ENCODE measurements at regions of chr6 and their contacts with region 1.

Region 1: DNA sequence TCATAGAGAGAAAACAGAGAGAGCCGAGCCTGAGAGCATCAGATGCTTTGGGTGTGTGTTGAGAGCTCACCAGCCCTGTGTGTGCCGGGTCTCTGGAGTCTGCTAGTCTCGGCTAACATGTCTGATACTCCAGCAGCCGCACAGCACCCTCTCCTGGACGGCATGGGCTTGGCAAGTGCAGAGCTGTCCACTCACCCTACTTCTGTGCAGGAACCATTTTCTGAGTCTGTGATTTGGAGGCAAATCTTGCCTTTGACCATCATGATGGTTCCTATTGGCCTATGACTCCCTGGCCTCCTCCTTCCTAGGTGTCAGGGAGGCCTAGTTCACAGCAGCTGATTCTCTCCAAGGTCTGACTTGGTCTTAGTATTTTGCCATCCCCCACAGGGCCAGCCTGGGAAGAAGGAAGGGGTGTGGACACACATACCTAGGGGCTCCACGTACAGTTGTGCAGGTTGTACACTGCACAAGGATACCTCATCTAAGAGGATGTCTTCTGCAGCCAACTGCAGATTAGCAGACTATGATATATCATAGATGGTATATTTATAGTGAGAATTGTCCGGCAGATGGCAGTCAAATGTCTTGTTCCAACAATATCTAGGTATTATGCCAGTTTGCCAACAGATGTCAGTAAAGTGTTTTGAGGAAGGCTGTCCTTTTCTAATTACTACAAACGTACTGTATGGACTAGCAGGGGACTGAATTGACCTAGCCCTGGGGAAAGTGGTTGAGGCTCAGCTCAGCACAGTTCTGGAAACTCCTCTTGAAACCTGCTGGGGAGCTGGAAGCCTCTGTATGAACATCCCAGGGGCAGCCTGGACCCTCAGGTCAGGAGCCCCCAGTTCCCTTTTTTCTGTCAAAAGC is 13.0 kb downstream of the FGD2 start:
- DNase-seq: peak; percentile 85
- H3K4me3 ChIP-seq: no peak overlapping the region
- H3K27ac ChIP-seq: no peak overlapping the region
- H3K4me1 ChIP-seq: peaks cover 10% of the 10 kb centered on the region
- H3K27me3 ChIP-seq: no peaks in the 10 kb centered on the region
- CTCF ChIP-seq: peak; percentile 93 to 97
- POLR2A ChIP-seq: no peak

Region 2: DNA sequence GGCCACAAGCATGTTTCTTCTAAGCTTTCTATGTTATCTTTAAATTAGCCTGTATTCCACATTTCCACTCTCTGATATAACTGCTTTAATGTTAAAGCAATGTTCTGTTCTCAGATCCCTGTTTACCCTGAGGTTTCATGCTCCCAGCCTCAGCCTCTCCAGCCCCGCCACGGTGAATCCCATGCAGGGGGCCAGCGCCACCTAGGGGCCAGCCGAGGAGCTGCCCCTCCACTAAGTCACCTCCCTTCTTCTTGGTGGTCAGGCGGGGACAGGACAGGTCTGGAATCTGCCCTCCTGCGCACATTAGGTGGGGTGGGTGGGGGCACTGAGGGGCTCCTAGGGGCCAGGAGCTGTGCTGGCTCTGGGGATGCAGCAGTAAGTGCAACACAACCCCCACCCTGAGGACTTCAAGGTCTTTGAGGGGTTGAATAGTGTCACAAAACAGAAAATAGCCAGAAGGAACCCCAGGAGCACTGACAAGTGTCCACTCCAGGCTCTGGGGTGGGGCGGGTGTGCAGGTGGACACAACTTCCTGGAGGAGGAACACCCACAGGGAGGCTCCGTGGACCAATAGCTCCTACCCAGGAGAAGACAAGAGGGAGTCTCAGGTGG is 259.2 kb before region 1 on chr6:
- CTCF ChIA-PET with region 1: interaction called, 22 read pairs
- POLR2A ChIA-PET with region 1: no interaction called
- dilution Hi-C with region 1: no loop called
- intact Hi-C with region 1: no loop called
- DNase-seq: peak; percentile 85
- H3K4me3 ChIP-seq: no peak overlapping the region
- H3K27ac ChIP-seq: no peak overlapping the region
- H3K4me1 ChIP-seq: peaks cover 33% of the 10 kb centered on the region
- H3K27me3 ChIP-seq: no peaks in the 10 kb centered on the region
- CTCF ChIP-seq: peak; percentile 91 to 97
- POLR2A ChIP-seq: no peak

Region 3: DNA sequence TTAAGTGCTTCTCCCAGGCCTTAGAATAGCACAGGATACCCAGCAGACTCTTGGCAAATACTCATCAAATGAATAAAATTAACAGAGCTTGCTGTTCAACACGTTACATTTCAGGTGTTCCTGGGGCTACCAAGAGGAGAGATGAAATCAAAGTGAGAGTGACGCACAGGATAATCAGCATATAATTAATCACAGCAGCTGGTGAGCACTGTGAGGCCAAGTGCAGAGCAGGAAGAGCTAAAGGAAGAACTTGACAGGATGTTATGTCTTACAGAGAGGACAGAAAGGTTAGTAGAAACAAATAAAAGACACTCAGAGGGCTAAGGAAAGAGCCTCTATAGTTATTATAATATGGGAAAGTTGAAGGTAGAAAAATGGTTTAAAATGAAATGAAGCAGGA is 152.6 kb before region 1 on chr6:
- CTCF ChIA-PET with region 1: interaction called, 12 read pairs
- POLR2A ChIA-PET with region 1: no interaction called
- dilution Hi-C with region 1: no loop called
- intact Hi-C with region 1: no loop called
- DNase-seq: peak; percentile 45
- H3K4me3 ChIP-seq: no peak overlapping the region
- H3K27ac ChIP-seq: no peak overlapping the region
- H3K4me1 ChIP-seq: peaks cover 8% of the 10 kb centered on the region
- H3K27me3 ChIP-seq: no peaks in the 10 kb centered on the region
- CTCF ChIP-seq: no peak
- POLR2A ChIP-seq: no peak

Region 4: GRCh38 chr6:36904114-36904513 is 114.3 kb before region 1 on chr6:
- CTCF ChIA-PET with region 1: interaction called, 19 read pairs
- POLR2A ChIA-PET with region 1: no interaction called
- dilution Hi-C with region 1: no loop called
- intact Hi-C with region 1: no loop called
- DNase-seq: no peak
- H3K4me3 ChIP-seq: no peak overlapping the region
- H3K27ac ChIP-seq: no peak overlapping the region
- H3K4me1 ChIP-seq: peaks cover 5% of the 10 kb centered on the region
- H3K27me3 ChIP-seq: no peaks in the 10 kb centered on the region
- CTCF ChIP-seq: no peak
- POLR2A ChIP-seq: no peak

Region 5: GRCh38 chr6:36938536-36938935 is 79.9 kb before region 1 on chr6:
- CTCF ChIA-PET with region 1: no interaction called
- POLR2A ChIA-PET with region 1: no interaction called
- dilution Hi-C with region 1: no loop called
- intact Hi-C with region 1: no loop called
- DNase-seq: no peak
- H3K4me3 ChIP-seq: no peak overlapping the region
- H3K27ac ChIP-seq: no peak overlapping the region
- H3K4me1 ChIP-seq: peaks cover under 1% of the 10 kb centered on the region
- H3K27me3 ChIP-seq: peaks cover 0 to 3% of the 10 kb centered on the region in 2 experiments
- CTCF ChIP-seq: no peak
- POLR2A ChIP-seq: no peak

Region 6: GRCh38 chr6:36985808-36986703 is 32.4 kb before region 1 on chr6 and contains the start of gene MTCH1:
- CTCF ChIA-PET with region 1: interaction called, 19 read pairs
- POLR2A ChIA-PET with region 1: interaction called, 3 read pairs
- dilution Hi-C with region 1: no loop called
- intact Hi-C with region 1: loop called (anchors 1 kb)
- DNase-seq: peak; percentile 86
- H3K4me3 ChIP-seq: peak within 1 kb of the TSS; percentile 71 to 95 (median 87)
- H3K27ac ChIP-seq: peak within 1 kb of the TSS; percentile 71
- H3K4me1 ChIP-seq: peaks cover 29% of the 10 kb centered on the region
- H3K27me3 ChIP-seq: peaks cover 0 to 5% of the 10 kb centered on the region in 2 experiments
- CTCF ChIP-seq: no peak
- POLR2A ChIP-seq: peak; percentile 97
- total RNA-seq, gene MTCH1: 218 and 226 TPM in 2 replicates

Region 7: GRCh38 chr6:37074053-37074827 is 55.8 kb after region 1 on chr6:
- CTCF ChIA-PET with region 1: no interaction called
- POLR2A ChIA-PET with region 1: no interaction called
- dilution Hi-C with region 1: no loop called
- intact Hi-C with region 1: no loop called
- DNase-seq: no peak
- H3K4me3 ChIP-seq: no peak overlapping the region
- H3K27ac ChIP-seq: no peak overlapping the region
- H3K4me1 ChIP-seq: no peaks in the 10 kb centered on the region
- H3K27me3 ChIP-seq: peaks cover 7% of the 10 kb centered on the region in 2 experiments
- CTCF ChIP-seq: no peak
- POLR2A ChIP-seq: no peak

Region 8: GRCh38 chr6:37137201-37138090 is 119.0 kb after region 1 on chr6:
- CTCF ChIA-PET with region 1: no interaction called
- POLR2A ChIA-PET with region 1: no interaction called
- dilution Hi-C with region 1: no loop called
- intact Hi-C with region 1: no loop called
- DNase-seq: peak; percentile 96
- H3K4me3 ChIP-seq: no peak overlapping the region
- H3K27ac ChIP-seq: peak overlapping the region; percentile 99
- H3K4me1 ChIP-seq: peaks cover 44% of the 10 kb centered on the region
- H3K27me3 ChIP-seq: no peaks in the 10 kb centered on the region
- CTCF ChIP-seq: no peak
- POLR2A ChIP-seq: no peak

Region 9: GRCh38 chr6:37169496-37170272 is 151.3 kb after region 1 on chr6 and contains the start of gene PIM1:
- CTCF ChIA-PET with region 1: interaction called, 120 read pairs
- POLR2A ChIA-PET with region 1: no interaction called
- dilution Hi-C with region 1: no loop called
- intact Hi-C with region 1: loop called (anchors 1 kb)
- DNase-seq: peak; percentile 97
- H3K4me3 ChIP-seq: peak within 1 kb of the TSS; percentile 61 to 95 (median 74)
- H3K27ac ChIP-seq: peak within 1 kb of the TSS; percentile 66
- H3K4me1 ChIP-seq: peaks cover 22% of the 10 kb centered on the region
- H3K27me3 ChIP-seq: no peaks in the 10 kb centered on the region
- CTCF ChIP-seq: no peak
- POLR2A ChIP-seq: peak; percentile 4
- total RNA-seq, gene PIM1: 10.5 and 11.3 TPM in 2 replicates